Mammary epithelial cell (primary cell): ENCODE measurements at regions of chr10 and their contacts with region 1.

Region 1: DNA sequence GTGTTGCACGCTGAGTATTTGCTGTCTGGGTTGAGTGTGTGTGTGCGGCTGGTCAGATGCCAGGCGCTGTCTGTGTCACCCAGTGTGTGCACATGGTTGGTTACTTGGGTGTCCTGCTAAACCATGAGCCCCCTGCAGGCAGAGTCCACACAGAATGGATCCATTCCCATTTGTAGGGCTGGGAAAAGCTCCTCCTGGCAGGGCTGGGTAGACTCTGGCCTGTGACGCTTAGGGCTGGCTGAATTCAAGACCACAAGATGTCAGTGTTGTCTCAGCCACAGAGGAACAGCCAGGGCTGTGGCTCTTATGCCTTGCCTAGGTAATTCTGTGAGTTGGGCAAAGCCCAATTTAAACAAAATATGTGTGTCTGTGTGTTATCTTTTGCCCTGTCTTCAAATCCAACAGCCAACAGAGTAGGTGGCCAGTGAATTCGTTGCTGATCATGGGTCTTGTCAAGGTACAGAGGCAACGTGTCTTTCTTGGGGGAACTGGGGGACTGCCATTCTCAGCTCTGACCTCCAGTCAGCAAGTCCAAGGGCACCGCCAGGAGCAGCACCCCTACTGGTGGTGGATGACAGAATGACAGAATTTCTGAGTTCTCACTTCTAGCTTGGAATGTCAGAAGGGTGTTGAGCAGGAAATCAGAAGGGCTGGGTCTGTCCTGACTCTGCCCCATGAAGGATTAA is 285.1 kb downstream of the CCSER2 start:
- DNase-seq: peak; percentile 51
- H3K4me3 ChIP-seq: no peak overlapping the region
- H3K27ac ChIP-seq: no peak overlapping the region
- H3K4me1 ChIP-seq: no peaks in the 10 kb centered on the region
- H3K27me3 ChIP-seq: no peaks in the 10 kb centered on the region
- CTCF ChIP-seq: peak; percentile 51 to 72

Region 2: DNA sequence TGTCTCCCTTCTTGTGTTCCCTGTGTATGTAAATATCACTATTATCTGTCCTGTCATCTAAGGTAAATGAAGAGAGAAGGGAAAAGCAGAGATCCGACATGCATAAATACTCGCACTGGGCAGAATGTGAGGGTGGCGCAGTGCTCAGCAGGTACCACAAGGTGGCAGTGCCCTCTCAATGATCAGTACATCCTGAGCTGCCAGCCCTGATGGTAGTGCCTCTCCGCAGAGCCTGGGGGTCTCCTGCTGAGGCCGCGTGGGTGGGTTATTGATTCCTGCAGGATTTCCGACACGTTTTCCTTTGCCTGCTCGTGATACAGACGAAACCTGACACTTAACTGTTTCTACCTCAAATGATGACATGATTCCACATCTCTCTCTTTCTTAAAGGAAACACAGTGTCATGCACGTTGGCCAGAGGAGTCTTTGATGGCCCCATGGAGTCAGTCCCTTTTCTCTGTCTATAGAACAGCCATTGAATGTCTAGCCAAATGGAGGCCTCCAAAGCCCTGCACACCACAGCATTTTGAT is 348.8 kb before region 1 on chr10:
- CTCF ChIA-PET with region 1: interaction called, 3 read pairs
- dilution Hi-C with region 1: no loop called
- in situ Hi-C with region 1: no loop called
- intact Hi-C with region 1: loop called (anchors 5 kb)
- DNase-seq: peak; percentile 36
- H3K4me3 ChIP-seq: no peak overlapping the region
- H3K27ac ChIP-seq: no peak overlapping the region
- H3K4me1 ChIP-seq: peaks cover 3% of the 10 kb centered on the region
- H3K27me3 ChIP-seq: no peaks in the 10 kb centered on the region
- CTCF ChIP-seq: peak; percentile 98 to 99

Region 3: GRCh38 chr10:84665883-84666463 is 52.5 kb after region 1 on chr10:
- CTCF ChIA-PET with region 1: interaction called, 4 read pairs
- dilution Hi-C with region 1: no loop called
- in situ Hi-C with region 1: no loop called
- intact Hi-C with region 1: loop called (anchors 2 kb)
- DNase-seq: peak; percentile 15
- H3K4me3 ChIP-seq: no peak overlapping the region
- H3K27ac ChIP-seq: no peak overlapping the region
- H3K4me1 ChIP-seq: no peaks in the 10 kb centered on the region
- H3K27me3 ChIP-seq: no peaks in the 10 kb centered on the region
- CTCF ChIP-seq: peak; percentile 87 to 92

Region 4: GRCh38 chr10:84743483-84743882 is 130.0 kb after region 1 on chr10:
- CTCF ChIA-PET with region 1: interaction called, 4 read pairs
- dilution Hi-C with region 1: no loop called
- in situ Hi-C with region 1: no loop called
- intact Hi-C with region 1: loop called (anchors 1 kb)
- DNase-seq: no peak
- H3K4me3 ChIP-seq: no peak overlapping the region
- H3K27ac ChIP-seq: no peak overlapping the region
- H3K4me1 ChIP-seq: no peaks in the 10 kb centered on the region
- H3K27me3 ChIP-seq: no peaks in the 10 kb centered on the region
- CTCF ChIP-seq: peak; percentile 51 to 69

Region 5: DNA sequence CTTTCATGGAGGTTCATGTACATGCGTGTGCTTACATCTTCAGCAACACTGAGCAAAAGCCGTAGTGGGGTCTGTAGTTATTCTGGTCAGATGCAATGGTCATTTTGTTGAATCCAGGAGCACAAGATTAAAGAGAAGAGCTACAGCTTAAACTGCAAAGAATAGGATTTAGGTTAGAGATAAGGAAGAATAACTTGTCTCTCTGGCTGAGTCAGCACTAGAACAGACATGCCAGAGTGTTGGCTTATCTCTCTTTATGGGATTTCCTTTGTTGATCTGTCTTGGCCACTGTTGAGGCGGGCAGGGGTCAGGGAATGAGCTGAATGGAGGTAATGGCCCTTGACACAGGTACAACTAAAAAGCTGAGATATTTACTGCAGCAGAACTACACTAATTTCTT is 188.4 kb after region 1 on chr10:
- CTCF ChIA-PET with region 1: no interaction called
- dilution Hi-C with region 1: no loop called
- in situ Hi-C with region 1: no loop called
- intact Hi-C with region 1: no loop called
- DNase-seq: no peak
- H3K4me3 ChIP-seq: no peak overlapping the region
- H3K27ac ChIP-seq: no peak overlapping the region
- H3K4me1 ChIP-seq: no peaks in the 10 kb centered on the region
- H3K27me3 ChIP-seq: no peaks in the 10 kb centered on the region
- CTCF ChIP-seq: no peak

Region 6: DNA sequence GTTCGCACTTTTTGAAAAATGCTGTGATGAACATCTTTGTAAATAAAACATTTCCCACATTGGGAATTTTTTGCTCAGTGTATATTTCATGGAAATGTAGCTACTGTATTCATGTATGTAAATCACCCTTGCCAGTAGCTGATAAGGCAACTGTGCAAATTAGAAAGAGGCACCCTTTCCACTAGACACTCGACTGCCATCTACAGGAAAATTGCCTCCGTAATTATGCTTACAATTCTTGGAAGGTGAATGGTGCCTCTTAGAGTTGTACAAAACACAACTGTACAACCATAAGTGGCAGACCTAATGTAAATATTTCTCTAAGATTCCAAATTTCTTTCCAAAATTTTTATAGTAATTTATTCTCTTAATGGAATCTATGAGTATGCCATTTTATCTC is 206.6 kb after region 1 on chr10:
- CTCF ChIA-PET with region 1: no interaction called
- dilution Hi-C with region 1: no loop called
- in situ Hi-C with region 1: no loop called
- intact Hi-C with region 1: loop called (anchors 2 kb)
- DNase-seq: no peak
- H3K4me3 ChIP-seq: no peak overlapping the region
- H3K27ac ChIP-seq: no peak overlapping the region
- H3K4me1 ChIP-seq: peaks cover 17% of the 10 kb centered on the region
- H3K27me3 ChIP-seq: peaks cover 3% of the 10 kb centered on the region
- CTCF ChIP-seq: peak; percentile 11 to 41